AG04449 (cell line): ENCODE measurements at regions of chr3 and their contacts with region 1.

Region 1: GRCh38 chr3:141460097-141460704 is 26.6 kb upstream of the RASA2 start:
- DNase-seq: no peak
- H3K4me3 ChIP-seq: no peak overlapping the region
- CTCF ChIP-seq: peak; percentile 89

Region 2: GRCh38 chr3:141336672-141337522 is 123.3 kb before region 1 on chr3:
- CTCF ChIA-PET with region 1: interaction called, 29 read pairs
- POLR2A ChIA-PET with region 1: no interaction called
- DNase-seq: no peak
- H3K4me3 ChIP-seq: no peak overlapping the region
- CTCF ChIP-seq: no peak

Region 3: DNA sequence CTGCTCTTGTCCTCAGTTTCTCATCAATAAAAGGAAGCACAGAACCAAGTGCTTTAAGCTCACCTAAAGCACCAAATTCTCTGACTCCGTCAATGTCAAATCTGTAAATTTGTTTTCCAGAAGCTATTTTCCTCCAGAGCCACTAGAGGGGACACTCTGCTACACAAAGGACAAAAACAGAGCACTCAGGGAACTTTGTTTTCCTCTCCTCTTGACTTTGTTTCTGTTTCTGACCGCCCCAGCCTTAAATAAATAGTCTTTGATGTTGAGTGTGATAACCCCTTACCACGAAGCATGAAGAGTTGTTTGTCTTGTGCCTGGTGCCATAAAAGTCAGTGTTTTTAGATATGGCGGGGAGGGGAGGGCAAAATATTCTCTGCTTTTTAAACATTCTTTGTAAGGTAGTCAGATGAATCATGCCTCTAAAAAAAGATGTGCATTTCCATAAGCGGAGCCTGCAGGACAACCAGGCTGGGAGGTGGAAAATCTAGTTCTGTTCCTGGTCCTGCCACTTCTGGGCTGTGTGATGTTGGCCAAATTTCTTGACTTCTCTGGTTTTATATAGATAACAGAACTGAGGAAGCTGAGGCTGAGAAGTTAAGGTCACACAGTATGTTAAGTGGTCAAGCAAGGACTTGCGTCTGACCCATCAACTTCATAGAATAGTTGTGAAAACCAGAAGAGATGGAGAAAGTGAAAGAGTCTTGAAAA is 99.2 kb before region 1 on chr3:
- CTCF ChIA-PET with region 1: interaction called, 173 read pairs
- POLR2A ChIA-PET with region 1: interaction called, 3 read pairs
- DNase-seq: peak; percentile 87
- H3K4me3 ChIP-seq: no peak overlapping the region; the same call in 1 of the 2 replicates
- CTCF ChIP-seq: peak; percentile 72

Region 4: DNA sequence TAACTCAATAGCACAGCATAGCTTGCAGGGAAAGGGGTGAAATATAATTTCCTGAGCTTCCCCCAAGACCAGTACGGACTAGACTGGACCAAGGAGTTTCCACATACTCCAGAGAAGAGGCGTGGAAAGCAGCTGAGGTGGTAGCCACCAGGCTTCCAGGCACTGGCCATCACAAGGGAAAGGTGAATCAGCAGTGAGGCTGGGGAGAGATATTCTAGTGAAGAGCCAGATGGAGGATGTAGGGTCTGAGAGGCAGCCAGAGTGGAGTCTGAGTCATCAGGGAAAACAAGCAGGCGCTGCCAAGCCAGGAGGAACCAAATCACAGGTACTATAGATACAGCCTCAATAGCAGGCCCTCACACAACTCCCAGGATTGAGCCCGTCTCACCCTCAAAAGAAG is 17.0 kb after region 1 on chr3:
- CTCF ChIA-PET with region 1: interaction called, 44 read pairs
- POLR2A ChIA-PET with region 1: no interaction called
- DNase-seq: no peak
- H3K4me3 ChIP-seq: no peak overlapping the region
- CTCF ChIP-seq: no peak

Region 5: DNA sequence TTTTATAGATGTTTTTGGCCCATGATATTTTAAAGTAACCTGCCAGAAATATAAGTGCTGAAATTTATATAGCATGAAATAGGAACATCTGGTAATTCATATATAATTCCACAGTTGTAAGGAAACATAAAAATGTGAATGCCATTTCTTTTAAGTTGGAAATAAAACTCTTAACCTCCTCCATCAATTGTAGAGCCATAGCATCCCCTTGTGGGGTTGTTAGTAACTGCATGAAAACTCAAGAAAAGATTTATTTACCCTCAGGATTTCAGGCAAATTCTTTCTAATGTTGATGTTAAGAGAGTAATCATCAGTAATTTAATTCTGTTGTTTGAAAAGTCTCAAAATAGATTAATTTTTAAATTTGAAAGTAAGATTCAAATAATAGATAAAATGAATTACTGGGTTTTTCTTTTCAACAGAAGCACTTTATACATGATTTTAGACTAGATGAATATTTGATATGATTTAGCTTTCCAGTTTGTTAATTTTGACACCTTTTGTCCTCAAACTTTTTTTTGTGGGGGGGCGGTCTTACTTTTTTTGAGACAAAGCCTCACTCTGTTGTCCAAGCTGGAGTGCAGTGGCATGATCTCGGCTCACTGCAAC is 101.3 kb after region 1 on chr3:
- CTCF ChIA-PET with region 1: interaction called, 517 read pairs
- POLR2A ChIA-PET with region 1: no interaction called
- DNase-seq: no peak
- H3K4me3 ChIP-seq: no peak overlapping the region
- CTCF ChIP-seq: peak; percentile 74

Region 6: DNA sequence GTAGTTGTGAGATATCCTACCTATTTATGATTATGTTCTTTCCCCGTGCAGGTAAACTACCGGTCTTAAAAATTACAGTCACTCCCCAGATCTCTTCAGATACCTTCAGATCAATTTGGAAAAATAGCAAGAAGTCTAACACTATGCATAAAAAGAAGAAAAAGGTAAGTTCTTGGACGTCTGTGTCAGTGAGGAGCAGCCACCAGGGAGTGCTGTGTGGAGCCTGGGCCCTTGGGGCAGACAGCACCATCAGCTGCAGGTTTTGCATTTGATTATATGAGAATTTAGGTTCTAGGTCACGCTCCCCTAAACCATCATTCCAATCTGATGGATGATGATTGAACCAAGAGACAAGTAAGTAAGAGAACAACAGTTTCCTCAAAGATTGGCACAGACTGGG is 269.0 kb after region 1 on chr3:
- CTCF ChIA-PET with region 1: no interaction called
- POLR2A ChIA-PET with region 1: no interaction called
- DNase-seq: no peak
- H3K4me3 ChIP-seq: no peak overlapping the region
- CTCF ChIP-seq: no peak

Region 7: GRCh38 chr3:142549986-142550385 is 1089.8 kb after region 1 on chr3:
- CTCF ChIA-PET with region 1: no interaction called
- POLR2A ChIA-PET with region 1: no interaction called
- DNase-seq: no peak
- H3K4me3 ChIP-seq: no peak overlapping the region
- CTCF ChIP-seq: no peak